Naive thymus-derived CD4-positive, alpha-beta T cell (primary cell): ENCODE measurements at regions of chr1 and their contacts with region 1.

Region 1: DNA sequence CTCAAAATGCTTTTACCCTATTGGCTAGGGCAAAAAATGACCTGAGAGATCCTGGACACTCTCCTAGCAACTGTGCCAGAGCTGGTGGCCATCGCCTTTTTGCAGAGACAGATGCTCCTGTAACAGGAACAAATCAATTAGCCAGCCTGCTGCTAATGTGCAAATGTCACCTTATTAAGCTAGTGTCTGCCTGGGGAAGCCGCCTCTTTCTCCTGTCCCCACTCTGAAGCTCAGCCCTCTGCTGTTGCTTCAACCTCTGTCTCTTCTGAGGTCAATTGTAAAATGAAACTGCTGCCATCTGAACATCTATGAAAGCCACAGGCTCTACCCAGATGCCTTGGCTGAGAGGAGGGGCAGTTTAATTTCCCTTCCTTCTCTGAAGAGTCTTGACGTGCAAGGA is 85.5 kb upstream of the CACNA1E start:
- DNase-seq: peak in 7 of 9 donors; percentile 24 to 57 (median 45)
- ATAC-seq: peak; percentile 47
- H3K4me3 ChIP-seq: peak overlapping the region; percentile 22
- H3K4me3 Mint-ChIP-seq: peak overlapping the region in 8 of 10 donors; percentile 57 to 82 (median 74)
- H3K27ac ChIP-seq: peak overlapping the region; percentile 62
- H3K27ac Mint-ChIP-seq: peak overlapping the region in 2 of 9 donors; percentile 83 to 94
- H3K4me1 ChIP-seq: peaks cover 41 to 77% of the 10 kb centered on the region in 2 donors
- H3K4me1 Mint-ChIP-seq: peaks cover 26 to 45% (median 41%) of the 10 kb centered on the region in 7 donors
- H3K27me3 ChIP-seq: no peaks in the 10 kb centered on the region
- H3K27me3 Mint-ChIP-seq: no peaks in the 10 kb centered on the region

Region 2: GRCh38 chr1:180962178-180962577 is 435.7 kb before region 1 on chr1:
- CTCF ChIA-PET with region 1: no interaction called
- POLR2A ChIA-PET with region 1: no interaction called
- intact Hi-C with region 1: no loop called
- DNase-seq: no peak
- ATAC-seq: no peak
- H3K4me3 ChIP-seq: no peak overlapping the region
- H3K4me3 Mint-ChIP-seq: no peak overlapping the region
- H3K27ac ChIP-seq: no peak overlapping the region
- H3K27ac Mint-ChIP-seq: no peak overlapping the region
- H3K4me1 ChIP-seq: no peaks in the 10 kb centered on the region
- H3K4me1 Mint-ChIP-seq: peaks cover 0 to 7% (median 4%) of the 10 kb centered on the region in 7 donors
- H3K27me3 ChIP-seq: no peaks in the 10 kb centered on the region
- H3K27me3 Mint-ChIP-seq: no peaks in the 10 kb centered on the region

Region 3: DNA sequence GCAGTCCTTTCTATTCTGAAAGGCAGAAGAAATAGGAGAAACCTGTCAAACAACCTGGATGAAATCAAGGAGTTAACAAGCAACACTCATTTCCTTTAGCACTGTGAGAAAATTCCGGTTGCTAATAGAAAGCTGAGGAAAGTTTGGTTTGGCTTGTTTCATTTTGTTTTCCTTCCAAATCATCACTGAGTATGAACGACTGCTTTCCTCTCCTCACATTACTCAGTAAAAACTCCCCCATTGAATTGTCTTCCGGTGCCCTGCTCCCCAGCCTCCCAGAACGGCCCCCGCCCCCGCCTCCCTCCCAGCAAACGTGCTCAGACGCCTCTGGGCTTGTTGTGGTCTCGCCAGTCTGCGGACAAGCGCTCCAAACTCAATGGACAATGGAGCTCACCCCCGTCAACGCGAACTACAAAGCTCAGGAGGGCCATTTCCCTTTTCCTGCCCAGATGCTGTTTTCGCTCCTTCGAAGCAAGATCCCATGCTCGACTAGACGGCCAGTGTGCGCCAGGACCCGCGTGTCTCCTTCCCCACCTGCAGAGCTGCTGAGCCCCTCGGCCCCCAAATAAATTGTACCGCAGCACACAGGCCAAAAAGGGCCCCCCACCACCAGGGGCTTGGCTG is 375.9 kb before region 1 on chr1:
- CTCF ChIA-PET with region 1: no interaction called
- POLR2A ChIA-PET with region 1: interaction called, 7 read pairs
- intact Hi-C with region 1: loop called in 1 of 2 experiments (anchors 5 kb)
- DNase-seq: peak; percentile 12 to 67 (median 33)
- ATAC-seq: peak; percentile 21
- H3K4me3 ChIP-seq: peak overlapping the region; percentile 84
- H3K4me3 Mint-ChIP-seq: peak overlapping the region; percentile 92 to 98 (median 94)
- H3K27ac ChIP-seq: peak overlapping the region; percentile 84
- H3K27ac Mint-ChIP-seq: peak overlapping the region; percentile 93 to 100 (median 97)
- H3K4me1 ChIP-seq: peaks cover 21 to 22% of the 10 kb centered on the region in 2 donors
- H3K4me1 Mint-ChIP-seq: peaks cover 17 to 59% (median 48%) of the 10 kb centered on the region in 7 donors
- H3K27me3 ChIP-seq: no peaks in the 10 kb centered on the region
- H3K27me3 Mint-ChIP-seq: peaks cover 0 to 25% (median 0%) of the 10 kb centered on the region in 5 donors

Region 4: DNA sequence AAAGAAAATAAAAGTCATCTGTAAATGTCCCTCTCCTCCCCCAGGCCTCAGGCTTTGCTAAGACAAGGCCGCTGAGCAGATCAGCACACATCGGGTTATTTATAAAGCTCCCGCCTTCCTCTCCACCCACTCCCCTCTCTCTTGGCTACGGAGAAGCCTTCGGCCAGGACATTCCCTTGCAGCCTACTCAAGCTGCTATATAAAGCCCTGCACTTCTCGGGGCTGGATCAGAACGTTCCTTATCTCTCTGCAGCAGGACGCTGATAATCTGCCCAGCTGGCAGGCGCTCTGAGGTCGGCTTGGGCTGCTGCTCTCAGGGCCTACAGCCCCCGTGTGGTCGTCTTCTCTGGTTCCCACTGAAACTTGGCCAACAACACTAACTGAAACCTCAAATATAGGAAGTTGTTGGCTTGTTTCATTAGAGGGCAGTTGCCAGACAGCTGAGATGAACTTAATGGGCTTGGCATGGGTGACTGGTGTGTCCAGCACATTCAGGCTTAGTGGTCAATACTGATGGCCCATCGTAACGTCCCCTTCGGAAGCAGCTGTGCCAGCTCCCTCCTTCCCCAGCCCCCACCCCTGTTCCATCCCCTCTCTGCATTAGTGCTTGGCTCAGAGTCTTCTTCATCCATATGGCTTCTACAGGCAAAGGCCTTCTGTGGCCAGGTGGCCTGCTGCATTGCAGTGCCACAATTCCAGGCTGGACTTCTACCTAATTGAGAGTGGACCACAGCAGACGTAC is 244.8 kb before region 1 on chr1:
- CTCF ChIA-PET with region 1: interaction called, 3 read pairs
- POLR2A ChIA-PET with region 1: no interaction called
- intact Hi-C with region 1: loop called in 1 of 2 experiments (anchors 1 kb)
- DNase-seq: no peak
- ATAC-seq: peak; percentile 58
- H3K4me3 ChIP-seq: no peak overlapping the region
- H3K4me3 Mint-ChIP-seq: no peak overlapping the region
- H3K27ac ChIP-seq: no peak overlapping the region
- H3K27ac Mint-ChIP-seq: peak overlapping the region in 1 of 9 donors; percentile 44
- H3K4me1 ChIP-seq: peaks cover 36 to 49% of the 10 kb centered on the region in 2 donors
- H3K4me1 Mint-ChIP-seq: peaks cover 37 to 75% (median 63%) of the 10 kb centered on the region in 7 donors
- H3K27me3 ChIP-seq: no peaks in the 10 kb centered on the region
- H3K27me3 Mint-ChIP-seq: peaks cover 0 to 27% (median 0%) of the 10 kb centered on the region in 5 donors

Region 5: GRCh38 chr1:181369416-181369815 is 28.4 kb before region 1 on chr1:
- CTCF ChIA-PET with region 1: no interaction called
- POLR2A ChIA-PET with region 1: interaction called, 7 read pairs
- intact Hi-C with region 1: loop called in 1 of 2 experiments (anchors 2 kb)
- DNase-seq: no peak
- ATAC-seq: no peak
- H3K4me3 ChIP-seq: no peak overlapping the region
- H3K4me3 Mint-ChIP-seq: no peak overlapping the region
- H3K27ac ChIP-seq: no peak overlapping the region
- H3K27ac Mint-ChIP-seq: no peak overlapping the region
- H3K4me1 ChIP-seq: no peaks in the 10 kb centered on the region
- H3K4me1 Mint-ChIP-seq: peaks cover 0 to 10% (median 0%) of the 10 kb centered on the region in 7 donors
- H3K27me3 ChIP-seq: no peaks in the 10 kb centered on the region
- H3K27me3 Mint-ChIP-seq: peaks cover 0 to 2% (median 0%) of the 10 kb centered on the region in 5 donors

Region 6: GRCh38 chr1:182259229-182259872 is 861.5 kb after region 1 on chr1:
- CTCF ChIA-PET with region 1: no interaction called
- POLR2A ChIA-PET with region 1: no interaction called
- intact Hi-C with region 1: loop called in 1 of 2 experiments (anchors 5 kb)
- DNase-seq: peak; percentile 21 to 79 (median 65)
- ATAC-seq: peak; percentile 90
- H3K4me3 ChIP-seq: peak overlapping the region; percentile 2
- H3K4me3 Mint-ChIP-seq: peak overlapping the region; percentile 28 to 82 (median 75)
- H3K27ac ChIP-seq: peak overlapping the region; percentile 72
- H3K27ac Mint-ChIP-seq: peak overlapping the region; percentile 83 to 97 (median 91)
- H3K4me1 ChIP-seq: peaks cover 11 to 20% of the 10 kb centered on the region in 2 donors
- H3K4me1 Mint-ChIP-seq: peaks cover 23 to 50% (median 43%) of the 10 kb centered on the region in 7 donors
- H3K27me3 ChIP-seq: no peaks in the 10 kb centered on the region
- H3K27me3 Mint-ChIP-seq: no peaks in the 10 kb centered on the region

Region 7: GRCh38 chr1:182404781-182405180 is 1006.9 kb after region 1 on chr1:
- CTCF ChIA-PET with region 1: no interaction called
- POLR2A ChIA-PET with region 1: no interaction called
- intact Hi-C with region 1: no loop called
- DNase-seq: no peak
- ATAC-seq: no peak
- H3K4me3 ChIP-seq: no peak overlapping the region
- H3K4me3 Mint-ChIP-seq: no peak overlapping the region
- H3K27ac ChIP-seq: no peak overlapping the region
- H3K27ac Mint-ChIP-seq: no peak overlapping the region
- H3K4me1 ChIP-seq: no peaks in the 10 kb centered on the region
- H3K4me1 Mint-ChIP-seq: no peaks in the 10 kb centered on the region
- H3K27me3 ChIP-seq: no peaks in the 10 kb centered on the region
- H3K27me3 Mint-ChIP-seq: peaks cover 7 to 49% (median 22%) of the 10 kb centered on the region in 5 donors